Heart right ventricle (tissue), 16 donors: ENCODE measurements at regions of chr2 and their contacts with region 1.

Region 1: GRCh38 chr2:231713730-231714430 is 5.6 kb downstream of the PTMA start:
- DNase-seq: peak; percentile 88 to 91
- ATAC-seq: peak; percentile 14 to 64 (median 46)
- H3K4me3 ChIP-seq: no peak overlapping the region
- H3K27ac ChIP-seq: peak overlapping the region in 9 of 10 donors; percentile 17 to 76 (median 54)
- H3K4me1 ChIP-seq: peaks cover 25 to 70% (median 53%) of the 10 kb centered on the region in 9 donors
- H3K27me3 ChIP-seq: no peaks in the 10 kb centered on the region
- CTCF ChIP-seq: peak; percentile 86 to 96 (median 95)

Region 2: DNA sequence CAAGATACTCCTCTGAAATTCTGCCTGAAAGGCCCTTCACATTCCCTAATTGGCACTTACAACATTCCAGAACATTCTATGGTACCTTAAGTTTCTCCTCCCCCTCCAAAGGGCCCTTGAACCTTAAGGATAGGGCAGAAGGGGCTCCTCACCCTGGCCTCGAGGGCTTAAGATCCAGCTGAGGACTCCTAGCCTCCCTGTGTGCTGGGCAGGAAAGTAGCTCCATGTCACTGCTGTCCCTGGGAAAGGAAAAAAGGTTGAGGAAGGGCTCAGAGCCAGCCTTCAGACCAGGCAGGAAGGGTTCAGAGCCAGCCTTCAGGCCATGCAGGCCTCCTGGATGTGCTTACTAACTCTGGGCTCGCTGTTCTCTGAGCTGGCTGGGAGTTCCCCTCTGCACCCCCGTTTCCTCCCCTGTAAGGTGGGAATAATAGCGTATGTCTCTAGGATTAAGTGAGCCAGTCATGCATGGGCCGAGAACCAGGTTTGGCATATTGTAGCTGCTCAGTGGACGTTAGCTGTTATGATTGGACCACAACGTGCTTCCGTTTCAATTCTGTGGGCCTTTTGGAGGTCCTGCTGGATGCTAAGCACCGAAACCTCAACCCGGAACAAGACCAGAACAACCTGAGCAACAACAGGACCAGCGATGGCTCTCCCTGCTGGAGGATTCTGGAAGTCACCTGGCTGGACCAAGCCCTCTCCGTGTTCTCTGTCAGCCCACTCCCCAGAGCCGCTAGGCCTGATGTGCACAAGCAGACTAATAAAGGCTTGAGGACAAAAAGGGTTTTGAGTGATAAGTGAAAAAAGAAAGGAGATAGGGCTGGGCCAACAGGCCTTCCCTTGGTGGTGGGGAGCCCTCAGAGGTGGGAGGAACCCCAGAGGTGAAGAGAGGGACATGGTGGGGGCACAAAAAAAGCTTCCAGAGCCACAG is 319.4 kb before region 1 on chr2:
- intact Hi-C with region 1: no loop called
- DNase-seq: no peak
- ATAC-seq: no peak
- H3K4me3 ChIP-seq: peak overlapping the region in 1 of 10 donors; percentile 42
- H3K27ac ChIP-seq: peak overlapping the region in 1 of 10 donors; percentile 70
- H3K4me1 ChIP-seq: peaks cover 0 to 35% (median 8%) of the 10 kb centered on the region in 9 donors
- H3K27me3 ChIP-seq: peaks cover 0 to 31% (median 20%) of the 10 kb centered on the region in 7 donors
- CTCF ChIP-seq: peak in 6 of 9 donors; percentile 9 to 20 (median 15)

Region 3: DNA sequence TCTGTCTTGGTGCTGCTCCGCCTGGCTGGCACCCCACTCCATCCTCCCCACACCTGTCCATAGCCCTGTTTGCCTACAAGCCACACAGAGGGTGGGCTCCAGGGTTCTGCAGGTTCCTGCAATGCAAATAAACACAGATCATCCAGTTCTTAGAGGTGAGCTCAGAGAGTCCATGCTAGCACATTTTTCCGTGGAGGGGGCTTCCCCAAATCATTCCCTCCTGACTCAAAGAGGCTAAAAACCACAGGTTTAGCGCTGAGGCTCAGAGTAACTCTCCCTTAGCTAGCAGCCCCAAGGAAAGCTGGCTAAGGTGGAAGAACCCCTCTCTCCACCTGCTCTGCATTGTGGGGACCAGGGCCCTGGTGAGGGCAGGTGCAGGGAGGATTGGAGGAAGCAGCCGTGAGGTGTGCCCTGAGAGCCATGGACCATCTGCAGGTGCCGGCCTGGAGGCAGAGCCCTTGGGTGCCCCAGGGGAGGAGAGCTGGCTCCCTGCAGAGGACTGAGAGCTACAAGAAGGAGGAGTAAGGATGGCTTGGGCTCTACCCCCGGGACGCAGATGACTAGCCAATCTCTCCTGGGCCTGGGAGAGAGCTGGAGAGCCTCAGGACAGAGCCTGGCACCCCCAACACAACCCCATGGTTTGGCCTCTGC is 145.0 kb before region 1 on chr2:
- intact Hi-C with region 1: loop called in 1 of 10 experiments (anchors 5 kb)
- DNase-seq: no peak
- ATAC-seq: peak in 1 of 8 donors; percentile 18
- H3K4me3 ChIP-seq: no peak overlapping the region
- H3K27ac ChIP-seq: no peak overlapping the region
- H3K4me1 ChIP-seq: no peaks in the 10 kb centered on the region
- H3K27me3 ChIP-seq: no peaks in the 10 kb centered on the region
- CTCF ChIP-seq: no peak

Region 4: GRCh38 chr2:231648587-231649174 is 65.2 kb before region 1 on chr2:
- intact Hi-C with region 1: loop called in 3 of 10 experiments (anchors 2 kb)
- DNase-seq: peak; percentile 68 to 79
- ATAC-seq: peak; percentile 63 to 84 (median 78)
- H3K4me3 ChIP-seq: no peak overlapping the region
- H3K27ac ChIP-seq: no peak overlapping the region
- H3K4me1 ChIP-seq: peaks cover 13 to 36% (median 27%) of the 10 kb centered on the region in 9 donors
- H3K27me3 ChIP-seq: no peaks in the 10 kb centered on the region
- CTCF ChIP-seq: peak; percentile 45 to 81 (median 69)

Region 5: DNA sequence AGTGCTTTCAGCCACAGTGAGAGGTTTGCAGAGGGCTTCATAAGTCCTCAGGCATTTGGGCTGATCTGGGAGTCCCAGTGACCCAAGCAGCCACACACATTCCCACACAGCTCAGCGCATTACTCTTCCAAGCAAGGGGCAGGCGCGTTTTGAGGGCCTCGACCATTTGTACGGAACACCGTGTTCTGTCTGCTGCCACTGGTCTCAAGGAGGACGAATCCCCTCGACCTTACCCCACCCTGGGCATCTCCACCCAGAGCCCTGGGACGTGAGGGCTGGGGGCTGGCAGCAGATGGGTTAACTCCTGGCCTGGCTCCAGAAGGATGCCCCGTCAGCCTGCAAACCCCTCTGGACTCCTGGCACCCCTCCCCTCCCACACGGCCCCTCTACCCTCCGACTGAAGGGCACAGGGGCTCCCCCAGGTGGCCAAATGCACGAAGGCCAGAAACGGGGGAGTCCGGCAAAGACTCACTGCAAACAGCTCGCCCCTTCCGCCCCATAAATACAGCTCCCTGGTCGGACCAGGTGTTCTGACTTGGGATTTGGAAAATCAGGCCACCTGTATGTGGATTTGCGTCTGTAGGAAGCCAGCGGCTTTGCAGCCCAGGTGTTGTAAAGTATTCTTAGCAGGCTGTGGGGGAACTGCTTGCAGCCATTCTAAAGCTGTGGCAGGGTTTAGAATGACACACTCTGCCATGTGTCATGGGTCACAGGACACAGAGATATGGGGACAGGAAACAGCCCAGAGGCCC is 39.1 kb before region 1 on chr2:
- intact Hi-C with region 1: loop called in 8 of 10 experiments (anchors 1 to 2 kb)
- DNase-seq: peak; percentile 77 to 80
- ATAC-seq: peak; percentile 39 to 58 (median 54)
- H3K4me3 ChIP-seq: no peak overlapping the region
- H3K27ac ChIP-seq: peak overlapping the region; percentile 58 to 97 (median 88)
- H3K4me1 ChIP-seq: peaks cover 21 to 63% (median 60%) of the 10 kb centered on the region in 9 donors
- H3K27me3 ChIP-seq: no peaks in the 10 kb centered on the region
- CTCF ChIP-seq: peak; percentile 75 to 96 (median 88)

Region 6: DNA sequence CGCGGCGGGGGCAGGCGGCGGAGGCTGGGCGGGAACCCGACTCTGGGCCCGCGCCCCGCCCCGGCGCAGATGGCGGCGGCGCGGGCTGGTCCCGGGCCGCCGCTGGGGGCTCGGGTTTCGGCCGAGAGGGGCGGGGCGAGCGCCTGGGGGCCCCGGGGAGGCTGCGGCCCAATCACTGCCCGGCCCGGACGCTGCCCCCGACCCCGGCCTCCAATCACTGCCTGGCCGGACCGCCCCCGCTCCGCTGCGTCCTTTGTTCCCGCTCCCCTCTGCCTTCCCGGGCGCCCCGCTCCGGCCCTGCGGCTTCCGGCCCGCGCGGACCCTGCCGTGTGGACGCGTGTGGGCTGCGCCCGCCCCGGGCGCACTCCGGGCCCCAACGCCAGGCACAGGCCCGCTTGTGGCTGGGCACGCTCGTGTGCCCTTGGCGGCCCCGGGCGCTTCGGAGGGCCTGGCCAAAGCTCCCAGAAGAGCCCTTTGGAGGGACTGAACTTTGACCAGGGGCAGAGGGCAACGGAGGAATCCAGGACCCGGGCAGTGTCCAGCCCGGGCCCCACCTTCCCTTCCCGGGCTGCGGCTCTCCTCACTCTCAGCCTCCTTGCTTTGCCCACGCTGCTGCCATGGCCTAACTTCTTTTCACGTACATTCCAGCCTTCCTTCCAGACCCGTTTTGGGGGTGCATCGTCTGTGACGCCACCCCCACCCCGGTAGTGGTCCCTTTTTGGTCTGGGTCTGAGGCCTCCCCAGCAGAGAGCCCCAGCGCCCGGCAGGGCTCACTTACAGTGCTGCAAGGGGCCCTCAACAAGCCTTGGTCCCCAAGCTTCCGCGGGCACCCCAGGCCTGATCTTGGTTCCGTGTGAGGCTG is 32.7 kb before region 1 on chr2:
- intact Hi-C with region 1: loop called (anchors 1 to 2 kb)
- DNase-seq: peak; percentile 90 to 91
- ATAC-seq: peak; percentile 84 to 94 (median 88)
- H3K4me3 ChIP-seq: peak overlapping the region; percentile 38 to 65 (median 54)
- H3K27ac ChIP-seq: peak overlapping the region; percentile 82 to 98 (median 93)
- H3K4me1 ChIP-seq: peaks cover 0 to 37% (median 17%) of the 10 kb centered on the region in 9 donors
- H3K27me3 ChIP-seq: no peaks in the 10 kb centered on the region
- CTCF ChIP-seq: no peak

Region 7: GRCh38 chr2:231780909-231781797 is 67.3 kb after region 1 on chr2 and contains the start of gene PDE6D:
- intact Hi-C with region 1: no loop called
- DNase-seq: peak; percentile 99 to 100
- ATAC-seq: peak; percentile 95 to 98 (median 96)
- H3K4me3 ChIP-seq: peak within 1 kb of the TSS; percentile 77 to 98 (median 90)
- H3K27ac ChIP-seq: peak within 1 kb of the TSS; percentile 43 to 95 (median 88)
- H3K4me1 ChIP-seq: peaks cover 2 to 49% (median 43%) of the 10 kb centered on the region in 9 donors
- H3K27me3 ChIP-seq: no peaks in the 10 kb centered on the region
- CTCF ChIP-seq: no peak
- total RNA-seq, gene PDE6D: 11.4 to 23.3 (median 18.4) TPM

Region 8: DNA sequence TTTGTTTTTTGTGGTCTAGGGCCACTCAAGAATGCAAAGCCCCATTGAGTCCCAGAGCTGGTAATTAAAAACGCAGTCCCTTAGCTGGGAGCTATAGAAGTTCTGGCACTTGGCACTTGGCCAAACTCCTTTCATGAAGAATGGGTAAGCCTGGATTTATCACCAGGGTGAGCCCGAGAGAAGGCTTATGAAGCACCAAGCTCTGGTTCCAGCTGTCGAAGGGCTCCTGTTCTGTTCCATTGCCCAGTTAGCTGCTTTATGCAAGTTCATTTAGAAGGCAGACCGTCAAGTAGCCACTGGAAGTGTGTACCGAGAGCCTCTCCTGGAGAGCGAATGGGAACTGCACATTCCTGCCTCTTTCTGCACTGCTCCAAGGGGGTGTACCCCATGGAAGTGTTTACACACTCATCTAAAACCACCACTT is 759.6 kb after region 1 on chr2:
- intact Hi-C with region 1: no loop called
- DNase-seq: no peak
- ATAC-seq: peak in 3 of 8 donors; percentile 25 to 39 (median 25)
- H3K4me3 ChIP-seq: no peak overlapping the region
- H3K27ac ChIP-seq: no peak overlapping the region
- H3K4me1 ChIP-seq: no peaks in the 10 kb centered on the region
- H3K27me3 ChIP-seq: peaks cover 0 to 70% (median 36%) of the 10 kb centered on the region in 7 donors
- CTCF ChIP-seq: no peak